ENCODE measurements at regions of chr10 and their contacts with region 1.

Region 1: DNA sequence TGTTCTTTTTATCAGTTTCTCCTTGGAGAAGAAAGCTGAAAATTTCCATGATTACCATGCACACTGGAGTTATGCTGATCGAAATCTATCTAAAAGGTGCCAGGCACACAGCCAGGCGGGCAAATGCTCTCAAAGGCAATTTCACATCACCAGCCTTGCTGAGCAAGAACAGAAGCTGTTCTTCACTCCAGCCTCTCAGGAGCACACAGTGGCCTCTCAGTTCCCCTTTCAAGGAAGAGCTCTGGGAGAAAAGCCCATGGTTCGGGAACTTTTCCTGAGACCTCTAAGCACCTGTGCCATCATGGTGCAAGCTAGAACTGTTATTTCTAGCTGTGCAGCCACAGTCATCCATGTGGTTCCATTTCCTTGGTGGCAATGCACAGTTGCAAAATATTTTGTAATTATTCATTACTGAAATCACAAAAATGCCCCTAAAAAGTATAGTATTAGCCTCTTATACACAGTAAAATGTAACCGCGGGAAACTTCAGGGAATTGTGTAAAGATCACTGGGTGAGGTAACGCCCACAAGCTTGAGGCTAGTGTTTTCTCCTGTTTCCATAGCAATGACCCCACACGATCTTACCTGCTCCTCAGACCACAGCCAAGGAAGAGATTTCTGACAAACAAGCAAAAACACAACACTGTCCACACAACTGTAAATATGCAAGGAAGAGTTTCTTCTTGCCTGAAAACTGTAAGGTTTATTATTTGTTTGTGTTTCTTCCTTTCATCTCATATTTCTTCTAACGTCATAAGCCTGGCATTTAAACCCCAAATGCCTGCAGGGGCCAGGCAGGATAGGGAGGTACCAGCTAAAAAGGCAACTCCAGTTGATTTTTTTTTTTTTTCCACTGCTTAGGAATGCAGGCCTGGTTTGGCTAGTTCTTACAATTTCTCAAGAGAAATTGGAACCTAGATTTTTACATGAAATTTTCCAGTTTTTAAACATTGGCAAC is 121.1 kb downstream of the FAM107B start:
- DNase-seq: no peak
- H3K4me3 ChIP-seq: peak overlapping the region in 1 of 2 donors; percentile 7
- H3K27ac ChIP-seq: peak overlapping the region; percentile 67 to 80
- H3K4me1 ChIP-seq: peaks cover 8 to 17% of the 10 kb centered on the region in 2 donors
- H3K27me3 ChIP-seq: no peaks in the 10 kb centered on the region
- CTCF ChIP-seq: no peak

Region 2: DNA sequence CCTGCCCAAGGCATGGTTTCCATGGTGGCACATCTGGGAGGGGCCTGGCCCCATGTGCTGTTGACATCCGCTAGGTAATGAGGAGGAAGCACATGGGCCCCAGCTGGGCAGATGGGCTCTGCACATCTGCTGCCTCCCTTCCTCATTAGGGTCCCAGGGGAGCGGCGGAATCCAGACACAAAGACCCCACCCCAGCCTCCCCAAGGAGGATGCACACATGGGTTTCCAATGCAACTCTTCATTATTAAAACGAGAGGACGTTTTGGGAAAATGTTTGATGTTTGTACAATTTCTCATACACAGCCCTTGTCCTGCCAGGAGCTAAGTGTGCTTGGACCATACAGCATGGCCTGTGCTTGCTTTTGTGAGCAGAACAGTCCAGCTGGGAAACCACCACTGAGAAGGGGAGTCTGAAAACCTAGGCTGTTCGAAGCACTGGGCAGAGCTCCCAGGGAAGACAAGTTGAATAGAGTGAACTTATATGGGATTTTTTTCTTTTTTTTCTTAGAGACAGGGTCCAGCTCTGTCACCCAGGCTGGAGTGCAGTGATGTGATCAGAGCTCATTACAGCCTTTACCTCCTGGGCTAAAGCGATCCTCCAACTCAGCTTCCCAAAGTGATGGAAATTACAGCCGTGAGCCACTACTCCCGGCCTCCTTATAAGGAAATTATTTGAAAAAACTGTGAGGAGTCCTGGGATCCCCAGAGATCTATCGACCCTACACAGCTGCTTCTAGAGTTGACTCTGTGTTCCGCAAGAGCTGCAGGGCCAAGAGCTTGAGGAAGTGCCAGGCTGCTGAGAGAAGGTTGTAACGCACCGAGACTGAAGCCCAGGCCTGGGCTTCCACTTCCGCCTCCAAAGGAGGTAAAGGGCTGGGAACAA is 97.7 kb after region 1 on chr10:
- intact Hi-C with region 1: loop called (anchors 5 kb)
- DNase-seq: peak in 1 of 2 donors; percentile 79
- H3K4me3 ChIP-seq: no peak overlapping the region
- H3K27ac ChIP-seq: peak overlapping the region; percentile 56 to 73
- H3K4me1 ChIP-seq: peaks cover 9 to 40% of the 10 kb centered on the region in 2 donors
- H3K27me3 ChIP-seq: no peaks in the 10 kb centered on the region
- CTCF ChIP-seq: no peak

Region 3: DNA sequence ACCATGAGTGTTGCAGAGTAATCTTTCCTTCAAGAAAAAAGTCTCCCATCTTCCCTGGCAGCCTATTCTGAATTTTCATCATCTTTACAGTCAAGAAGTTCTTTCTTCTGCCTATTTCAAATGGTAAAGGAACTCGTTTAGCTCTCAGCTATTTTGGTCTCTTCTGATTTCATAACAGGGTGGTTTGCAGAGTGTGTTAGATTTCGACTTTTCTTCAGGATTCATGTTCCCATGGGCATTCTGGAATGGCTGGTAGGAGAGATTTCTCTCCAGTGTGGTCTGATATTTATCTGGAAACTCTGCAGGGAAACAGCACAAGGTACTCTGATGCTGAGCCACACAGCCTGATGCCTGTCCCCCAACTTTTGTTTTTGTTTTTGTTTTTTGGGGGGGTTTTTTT is 828.6 kb after region 1 on chr10:
- intact Hi-C with region 1: no loop called
- DNase-seq: no peak
- H3K4me3 ChIP-seq: no peak overlapping the region
- H3K27ac ChIP-seq: peak overlapping the region; percentile 85 to 91
- H3K4me1 ChIP-seq: peaks cover 15 to 52% of the 10 kb centered on the region in 2 donors
- H3K27me3 ChIP-seq: no peaks in the 10 kb centered on the region
- CTCF ChIP-seq: no peak